PC-3 (cell line): ENCODE measurements at regions of chr1 and their contacts with region 1.

Region 1: DNA sequence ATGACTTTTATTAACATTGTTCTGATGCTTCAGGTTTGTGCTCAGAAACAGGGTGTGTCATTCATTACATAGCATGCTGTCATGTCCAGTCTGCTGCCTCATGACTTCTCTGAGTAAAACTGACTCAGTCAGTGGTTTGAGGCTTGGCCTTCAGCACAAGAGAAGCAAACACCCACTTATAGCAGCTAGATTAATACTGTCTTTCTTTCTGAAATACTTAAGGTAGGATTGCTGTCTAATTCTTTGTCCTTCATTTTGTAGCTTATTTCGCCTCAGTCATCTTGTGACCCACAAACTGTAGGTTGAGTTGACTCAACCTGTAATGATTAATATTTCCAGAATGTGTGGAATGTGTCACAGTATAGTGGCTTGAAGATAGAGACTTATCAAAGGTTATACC is 32.9 kb downstream of the RASAL2 start:
- DNase-seq: peak; percentile 89
- ATAC-seq: peak; percentile 96
- H3K4me3 ChIP-seq: peak overlapping the region; percentile 42
- H3K27ac ChIP-seq: peak overlapping the region; percentile 90
- H3K4me1 ChIP-seq: peaks cover 58% of the 10 kb centered on the region
- H3K27me3 ChIP-seq: no peaks in the 10 kb centered on the region
- CTCF ChIP-seq: no peak

Region 2: GRCh38 chr1:178238722-178239510 is 112.1 kb after region 1 on chr1:
- CTCF ChIA-PET with region 1: no interaction called
- POLR2A ChIA-PET with region 1: no interaction called
- intact Hi-C with region 1: loop called (anchors 5 kb)
- DNase-seq: peak; percentile 98
- ATAC-seq: peak; percentile 88
- H3K4me3 ChIP-seq: peak overlapping the region; percentile 23
- H3K27ac ChIP-seq: peak overlapping the region; percentile 98
- H3K4me1 ChIP-seq: peaks cover 62% of the 10 kb centered on the region
- H3K27me3 ChIP-seq: no peaks in the 10 kb centered on the region
- CTCF ChIP-seq: no peak